Gastrocnemius medialis (tissue), 4 donors: ENCODE measurements at regions of chr7 and their contacts with region 1.

Region 1: GRCh38 chr7:94400643-94401427 is 6.1 kb downstream of the COL1A2 start:
- DNase-seq: no peak
- ATAC-seq: no peak
- H3K4me3 ChIP-seq: no peak overlapping the region
- H3K27ac ChIP-seq: peak overlapping the region in 3 of 4 donors; percentile 1 to 16 (median 11)
- H3K4me1 ChIP-seq: no peaks in the 10 kb centered on the region
- H3K27me3 ChIP-seq: peaks cover 0 to 23% (median 14%) of the 10 kb centered on the region in 3 donors
- CTCF ChIP-seq: no peak
- POLR2A ChIP-seq: no peak

Region 2: GRCh38 chr7:94481279-94481678 is 80.4 kb after region 1 on chr7:
- in situ Hi-C with region 1: no loop called
- intact Hi-C with region 1: no loop called
- DNase-seq: no peak
- ATAC-seq: no peak
- H3K4me3 ChIP-seq: no peak overlapping the region
- H3K27ac ChIP-seq: peak overlapping the region; percentile 13 to 40 (median 37)
- H3K4me1 ChIP-seq: no peaks in the 10 kb centered on the region
- H3K27me3 ChIP-seq: no peaks in the 10 kb centered on the region
- CTCF ChIP-seq: no peak
- POLR2A ChIP-seq: no peak

Region 3: GRCh38 chr7:95126053-95126709 is 725.3 kb after region 1 on chr7:
- in situ Hi-C with region 1: no loop called
- intact Hi-C with region 1: loop called (anchors 5 kb)
- DNase-seq: no peak
- ATAC-seq: no peak
- H3K4me3 ChIP-seq: no peak overlapping the region
- H3K27ac ChIP-seq: no peak overlapping the region
- H3K4me1 ChIP-seq: no peaks in the 10 kb centered on the region
- H3K27me3 ChIP-seq: no peaks in the 10 kb centered on the region
- CTCF ChIP-seq: no peak
- POLR2A ChIP-seq: no peak